GM12878 (cell line): ENCODE measurements at regions of chr6 and their contacts with region 1.

Region 1: GRCh38 chr6:150395398-150396009 is 26.7 kb downstream of the IYD start:
- DNase-seq: no peak
- ATAC-seq: peak; percentile 98
- H3K4me3 ChIP-seq: no peak overlapping the region
- H3K27ac ChIP-seq: no peak overlapping the region
- H3K4me1 ChIP-seq: no peaks in the 10 kb centered on the region
- H3K27me3 ChIP-seq: no peaks in the 10 kb centered on the region; a peak in 2 of 4 replicates
- CTCF ChIP-seq: peak; percentile 71 to 77 (median 71)
- EP300 ChIP-seq: no peak
- POLR2A ChIP-seq: no peak
- RAD21 ChIP-seq: peak; percentile 76

Region 2: DNA sequence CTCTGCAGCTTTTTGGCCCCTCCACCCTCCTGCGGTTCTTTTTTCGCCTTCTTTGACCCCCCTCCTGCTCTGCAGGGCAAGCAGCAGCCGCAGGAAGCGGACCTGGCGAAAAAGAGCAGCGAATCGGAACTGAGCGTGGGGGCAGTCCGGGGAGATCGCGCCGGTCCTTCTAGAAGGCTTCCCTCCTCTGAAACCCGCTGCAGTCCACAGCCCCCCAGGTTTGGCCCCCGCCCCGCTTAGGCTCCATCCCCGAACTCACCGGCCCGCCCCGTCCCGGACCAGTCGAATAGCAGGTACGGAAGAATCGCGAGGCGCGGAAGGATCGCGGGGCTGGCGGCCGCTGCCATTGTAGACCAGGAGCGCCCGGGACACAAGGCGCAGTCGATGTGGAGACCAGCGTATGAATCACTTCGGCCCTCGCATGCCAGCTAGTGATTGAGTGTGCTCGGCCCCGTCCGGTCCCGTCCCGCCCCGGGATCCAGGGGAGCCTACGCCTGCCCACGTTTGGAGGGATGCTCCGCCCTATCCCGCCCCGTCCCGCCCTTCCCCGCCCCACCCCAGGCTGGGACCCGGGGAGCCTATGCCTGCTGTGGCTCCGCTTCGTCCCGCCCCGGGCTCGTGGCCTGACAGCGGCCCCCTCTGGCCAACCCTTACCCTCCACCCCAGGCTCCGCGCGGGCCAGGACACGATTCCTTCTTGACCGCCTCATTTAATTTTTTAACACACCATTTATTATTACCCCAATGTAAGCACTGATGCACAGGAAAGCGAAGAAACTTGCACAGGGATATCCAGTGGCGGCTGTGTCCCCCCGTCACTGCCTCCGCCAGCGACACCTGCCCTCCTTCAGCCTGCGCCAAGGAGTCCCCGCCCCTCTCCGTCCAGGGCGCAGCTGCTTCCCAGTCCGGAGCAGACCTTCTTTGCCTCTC is 326.5 kb before region 1 on chr6 and contains the start of gene ULBP3:
- CTCF ChIA-PET with region 1: interaction called, 115 read pairs
- POLR2A ChIA-PET with region 1: no interaction called
- RAD21 ChIA-PET with region 1: interaction called, 13 read pairs
- SMC1A ChIA-PET with region 1: interaction called, 13 read pairs
- in situ Hi-C with region 1: loop called (anchors 10 kb)
- intact Hi-C with region 1: no loop called
- DNase-seq: no peak
- ATAC-seq: peak; percentile 93
- H3K4me3 ChIP-seq: peak within 1 kb of the TSS; percentile 57
- H3K27ac ChIP-seq: no peak within 1 kb of the TSS
- H3K4me1 ChIP-seq: no peaks in the 10 kb centered on the region
- H3K27me3 ChIP-seq: peaks cover 0 to 2% of the 10 kb centered on the region in 2 experiments; a peak in 1 of 4 replicates
- CTCF ChIP-seq: peak; percentile 13 to 52 (median 44); a peak in 3 of 6 replicates
- EP300 ChIP-seq: no peak
- POLR2A ChIP-seq: peak; percentile 38; the same call in 1 of the 2 replicates
- RAD21 ChIP-seq: no peak
- polyA plus RNA-seq, gene ULBP3: not detected

Region 3: GRCh38 chr6:150334790-150335783 is 60.4 kb before region 1 on chr6:
- CTCF ChIA-PET with region 1: interaction called, 10 read pairs
- POLR2A ChIA-PET with region 1: no interaction called
- RAD21 ChIA-PET with region 1: interaction called, 8 read pairs
- SMC1A ChIA-PET with region 1: interaction called, 9 read pairs
- in situ Hi-C with region 1: no loop called
- intact Hi-C with region 1: loop called (anchors 2 kb)
- DNase-seq: no peak
- ATAC-seq: peak; percentile 43; the same call in 2 of the 3 replicates
- H3K4me3 ChIP-seq: no peak overlapping the region
- H3K27ac ChIP-seq: no peak overlapping the region
- H3K4me1 ChIP-seq: no peaks in the 10 kb centered on the region
- H3K27me3 ChIP-seq: no peaks in the 10 kb centered on the region
- CTCF ChIP-seq: peak; percentile 59 to 70 (median 68); a peak in 5 of 6 replicates
- EP300 ChIP-seq: no peak
- POLR2A ChIP-seq: no peak
- RAD21 ChIP-seq: peak; percentile 87

Region 4: GRCh38 chr6:150409576-150410066 is 14.1 kb after region 1 on chr6:
- CTCF ChIA-PET with region 1: interaction called, 21 read pairs
- POLR2A ChIA-PET with region 1: no interaction called
- RAD21 ChIA-PET with region 1: interaction called, 7 read pairs
- SMC1A ChIA-PET with region 1: interaction called, 11 read pairs
- in situ Hi-C with region 1: no loop called
- intact Hi-C with region 1: no loop called
- DNase-seq: no peak
- ATAC-seq: no peak
- H3K4me3 ChIP-seq: no peak overlapping the region
- H3K27ac ChIP-seq: no peak overlapping the region
- H3K4me1 ChIP-seq: no peaks in the 10 kb centered on the region
- H3K27me3 ChIP-seq: no peaks in the 10 kb centered on the region; a peak in 2 of 4 replicates
- CTCF ChIP-seq: no peak
- EP300 ChIP-seq: no peak
- POLR2A ChIP-seq: no peak
- RAD21 ChIP-seq: no peak